ENCODE measurements at regions of chr12 and their contacts with region 1.

Region 1: DNA sequence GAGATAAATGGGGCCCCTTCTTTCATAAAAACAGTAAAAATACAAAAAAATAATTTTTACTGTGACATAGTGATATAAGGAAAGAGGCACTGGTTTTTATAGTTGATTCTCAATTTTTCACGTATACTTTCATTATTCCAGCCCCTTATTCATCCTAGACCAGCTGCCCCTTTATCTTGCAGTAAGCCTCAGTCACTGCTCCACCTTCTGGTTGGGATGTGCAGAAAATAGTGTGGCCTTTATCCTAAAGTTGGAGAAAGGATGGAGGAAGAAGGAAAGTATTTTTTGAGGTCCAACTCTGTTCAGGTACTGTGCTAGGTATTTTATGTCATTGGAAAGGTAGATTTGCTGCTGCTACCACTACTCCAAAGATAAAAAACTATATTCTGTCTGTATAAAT is 172.7 kb downstream of the ANO6 start:
- DNase-seq: peak; percentile 60
- ATAC-seq: peak; percentile 50; the same call in 1 of the 2 replicates
- H3K4me3 ChIP-seq: no peak overlapping the region
- H3K27ac ChIP-seq: no peak overlapping the region
- H3K4me1 ChIP-seq: no peaks in the 10 kb centered on the region
- H3K27me3 ChIP-seq: no peaks in the 10 kb centered on the region
- CTCF ChIP-seq: peak; percentile 85

Region 2: GRCh38 chr12:45130881-45131281 is 257.7 kb before region 1 on chr12:
- CTCF ChIA-PET with region 1: no interaction called
- POLR2A ChIA-PET with region 1: no interaction called
- intact Hi-C with region 1: loop called (anchors 2 kb)
- DNase-seq: peak; percentile 86
- ATAC-seq: peak; percentile 78
- H3K4me3 ChIP-seq: no peak overlapping the region
- H3K27ac ChIP-seq: no peak overlapping the region
- H3K4me1 ChIP-seq: peaks cover 6% of the 10 kb centered on the region; the same call in 1 of the 2 replicates
- H3K27me3 ChIP-seq: 0 out of 2 replicates have a peak, but pooled peaks cover 4% of the 10 kb centered on the region
- CTCF ChIP-seq: peak; percentile 95

Region 3: GRCh38 chr12:45170456-45171042 is 218.0 kb before region 1 on chr12:
- CTCF ChIA-PET with region 1: no interaction called
- POLR2A ChIA-PET with region 1: no interaction called
- intact Hi-C with region 1: loop called (anchors 1 kb)
- DNase-seq: peak; percentile 85
- ATAC-seq: peak; percentile 84
- H3K4me3 ChIP-seq: no peak overlapping the region
- H3K27ac ChIP-seq: no peak overlapping the region
- H3K4me1 ChIP-seq: no peaks in the 10 kb centered on the region
- H3K27me3 ChIP-seq: no peaks in the 10 kb centered on the region
- CTCF ChIP-seq: peak; percentile 95

Region 4: GRCh38 chr12:45183246-45183645 is 205.3 kb before region 1 on chr12:
- CTCF ChIA-PET with region 1: interaction called, 3 read pairs
- POLR2A ChIA-PET with region 1: no interaction called
- intact Hi-C with region 1: loop called (anchors 1 kb)
- DNase-seq: peak; percentile 32
- ATAC-seq: no peak
- H3K4me3 ChIP-seq: no peak overlapping the region
- H3K27ac ChIP-seq: no peak overlapping the region
- H3K4me1 ChIP-seq: no peaks in the 10 kb centered on the region
- H3K27me3 ChIP-seq: no peaks in the 10 kb centered on the region
- CTCF ChIP-seq: peak; percentile 65

Region 5: DNA sequence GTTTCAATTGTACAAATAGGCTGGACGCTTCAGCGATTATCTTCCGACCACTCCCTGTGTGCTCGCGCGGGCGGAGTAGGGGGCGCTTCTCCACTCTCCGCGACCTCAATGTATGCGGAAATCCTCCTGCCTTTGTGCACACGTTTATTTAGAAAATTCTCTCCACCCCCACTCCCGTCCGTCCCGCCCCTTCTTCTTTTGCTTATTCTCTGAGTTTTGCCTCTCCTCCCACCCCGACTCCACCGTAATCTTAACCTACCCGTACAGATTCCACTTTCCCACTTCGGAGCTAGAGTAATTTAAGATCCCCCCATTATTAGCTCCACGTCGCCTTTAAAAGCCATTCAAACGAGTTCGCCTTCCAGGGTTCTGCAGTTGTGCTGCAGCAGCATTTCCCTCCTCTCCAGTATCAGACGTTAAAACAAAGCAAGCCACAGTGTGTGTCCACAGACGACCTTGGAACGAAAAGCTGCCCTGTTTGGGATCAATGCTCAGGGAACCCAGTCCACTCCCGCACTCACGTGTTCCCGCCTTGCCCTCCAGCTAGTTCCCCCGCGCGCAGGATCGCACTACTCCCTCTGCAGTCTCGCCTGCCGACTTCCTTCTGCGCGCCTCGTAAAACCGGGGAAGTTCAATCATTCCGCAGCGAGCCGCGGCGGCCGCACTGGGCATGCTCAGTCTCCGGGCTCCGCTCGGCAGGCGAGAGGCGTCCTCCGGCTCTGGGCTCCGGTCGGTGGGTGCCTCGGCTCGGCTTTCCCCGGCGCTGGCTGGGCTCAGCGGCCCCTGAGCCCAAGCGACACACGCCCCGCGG is 172.9 kb before region 1 on chr12 and contains the start of gene ANO6:
- CTCF ChIA-PET with region 1: no interaction called
- POLR2A ChIA-PET with region 1: no interaction called
- intact Hi-C with region 1: loop called (anchors 2 kb)
- DNase-seq: peak; percentile 90
- ATAC-seq: peak; percentile 75
- H3K4me3 ChIP-seq: peak within 1 kb of the TSS; percentile 94
- H3K27ac ChIP-seq: peak within 1 kb of the TSS; percentile 93
- H3K4me1 ChIP-seq: peaks cover 29% of the 10 kb centered on the region
- H3K27me3 ChIP-seq: no peaks in the 10 kb centered on the region
- CTCF ChIP-seq: peak; percentile 48
- total RNA-seq, gene ANO6: 18.1 and 23.0 TPM in 2 replicates

Region 6: DNA sequence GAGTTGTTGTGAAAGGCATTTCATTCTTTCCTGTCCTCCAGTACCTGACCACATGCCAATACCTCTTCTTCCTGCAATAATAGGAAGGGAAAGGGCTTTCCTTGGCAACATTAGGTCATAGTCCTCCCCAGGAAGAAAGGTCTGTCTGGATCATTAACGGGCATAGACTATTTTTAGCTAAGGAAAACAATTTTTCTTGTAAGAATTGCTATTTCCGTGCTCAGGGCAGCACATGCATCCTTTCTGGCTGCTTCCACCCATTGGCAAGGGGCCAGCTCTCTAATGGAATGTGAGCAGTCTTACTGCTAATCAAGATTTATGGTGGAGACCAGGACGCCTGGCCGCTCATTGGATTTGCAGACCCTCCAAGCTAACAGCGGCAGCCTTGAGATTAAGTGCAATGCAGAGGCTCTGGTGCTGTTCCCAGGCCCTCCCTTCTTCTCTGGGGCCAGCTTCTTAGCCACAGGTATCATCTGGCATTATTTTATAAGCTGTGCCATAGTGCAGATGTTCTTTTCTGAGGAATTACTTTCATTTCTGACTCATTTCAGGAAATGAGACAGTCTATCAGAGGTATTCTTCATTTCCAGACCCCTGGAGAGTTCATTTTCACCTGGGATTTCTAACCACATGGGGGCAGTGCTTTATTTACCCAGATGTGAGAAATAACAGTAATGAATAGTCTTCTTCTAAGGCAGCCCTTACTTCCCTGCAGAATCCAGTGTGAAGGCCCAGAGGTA is 119.7 kb before region 1 on chr12:
- CTCF ChIA-PET with region 1: no interaction called
- POLR2A ChIA-PET with region 1: no interaction called
- intact Hi-C with region 1: loop called (anchors 1 kb)
- DNase-seq: peak; percentile 95
- ATAC-seq: peak; percentile 73
- H3K4me3 ChIP-seq: peak overlapping the region; percentile 41
- H3K27ac ChIP-seq: peak overlapping the region; percentile 88
- H3K4me1 ChIP-seq: peaks cover 32% of the 10 kb centered on the region
- H3K27me3 ChIP-seq: no peaks in the 10 kb centered on the region
- CTCF ChIP-seq: peak; percentile 87